ENCODE measurements at regions of chr4 and their contacts with region 1.

Region 1: GRCh38 chr4:128517739-128518510 is 230.3 kb upstream of the PGRMC2 start:
- DNase-seq: peak; percentile 71
- ATAC-seq: peak; percentile 92

Region 2: DNA sequence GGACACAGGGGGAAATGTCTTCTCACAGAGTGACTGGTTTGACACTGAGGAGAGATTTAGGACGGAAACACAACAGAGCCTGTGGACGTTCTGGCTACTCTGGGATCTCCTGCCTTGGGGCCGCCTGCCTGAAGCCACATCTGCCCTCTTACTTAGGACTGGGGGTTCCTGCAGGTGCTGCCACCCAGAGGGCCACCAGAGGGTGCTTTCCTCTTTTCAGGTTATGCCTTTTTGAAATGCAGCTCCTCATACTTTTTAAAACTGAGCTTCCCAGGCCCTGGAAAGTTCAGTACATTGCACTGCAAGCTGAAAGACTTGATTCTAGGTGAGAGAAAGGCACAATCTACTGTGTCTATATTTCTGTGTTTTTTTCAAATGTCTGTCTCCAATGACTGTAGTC is 138.1 kb before region 1 on chr4:
- intact Hi-C with region 1: loop called (anchors 10 kb)
- DNase-seq: no peak
- ATAC-seq: peak; percentile 71

Region 3: GRCh38 chr4:128468123-128468989 is 49.6 kb before region 1 on chr4:
- intact Hi-C with region 1: loop called (anchors 5 kb)
- DNase-seq: no peak
- ATAC-seq: peak; percentile 82

Region 4: DNA sequence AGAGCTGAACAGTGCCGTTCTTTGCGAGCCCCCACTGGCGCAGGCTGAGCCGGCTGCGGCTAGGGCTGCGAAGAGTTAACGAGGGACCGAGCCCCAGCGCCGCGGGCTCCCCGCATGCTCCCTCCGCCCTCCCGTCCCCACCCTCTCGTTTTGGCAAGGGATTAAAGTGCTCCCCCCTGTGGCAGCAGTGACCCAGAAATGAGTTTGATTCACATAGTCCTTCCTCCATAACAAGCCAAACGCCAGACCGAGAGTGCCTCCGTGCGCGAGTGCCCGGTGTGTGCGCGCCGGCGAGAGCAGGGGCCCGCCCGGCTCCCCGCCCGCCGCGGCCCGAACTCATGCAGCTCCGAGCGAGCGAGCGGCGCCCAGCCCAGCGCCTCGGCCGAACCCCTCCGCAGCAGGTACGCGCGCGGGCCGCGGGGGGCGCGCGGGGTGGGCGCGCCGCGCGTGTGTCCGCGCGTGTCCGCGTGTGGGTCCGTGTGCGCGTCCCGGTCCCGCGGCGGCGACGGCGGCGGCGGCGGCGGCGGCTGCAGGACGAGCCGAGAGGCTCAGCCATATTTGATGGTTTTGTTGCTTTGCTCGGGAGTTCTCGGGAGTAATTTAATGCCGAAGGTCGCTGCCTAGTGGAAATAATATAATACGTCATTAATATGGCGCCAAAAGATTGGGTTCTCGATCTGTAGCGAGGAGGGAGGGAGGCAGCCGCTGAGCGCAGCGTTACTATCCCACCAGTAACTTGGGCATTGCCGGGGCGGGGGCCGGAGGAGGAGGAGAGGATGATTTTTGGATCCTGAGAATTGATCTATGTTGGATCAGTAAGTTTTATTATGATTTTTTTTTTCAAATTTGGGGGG is 291.8 kb after region 1 on chr4 and contains the start of gene JADE1:
- intact Hi-C with region 1: no loop called
- DNase-seq: peak; percentile 92
- ATAC-seq: peak; percentile 76
- total RNA-seq, gene JADE1: 24.3 TPM